Activated CD4-positive, alpha-beta memory T cell treated with anti-CD3 and anti-CD28 coated beads for 36 hours (primary cell): ENCODE measurements at regions of chr13 and their contacts with region 1.

Region 1: GRCh38 chr13:40069173-40070044 is 413.9 kb downstream of the COG6 start:
- DNase-seq: peak; percentile 83
- H3K4me3 Mint-ChIP-seq: no peak overlapping the region
- H3K27ac Mint-ChIP-seq: no peak overlapping the region
- H3K4me1 Mint-ChIP-seq: peaks cover 24% of the 10 kb centered on the region
- H3K27me3 Mint-ChIP-seq: no peaks in the 10 kb centered on the region

Region 2: DNA sequence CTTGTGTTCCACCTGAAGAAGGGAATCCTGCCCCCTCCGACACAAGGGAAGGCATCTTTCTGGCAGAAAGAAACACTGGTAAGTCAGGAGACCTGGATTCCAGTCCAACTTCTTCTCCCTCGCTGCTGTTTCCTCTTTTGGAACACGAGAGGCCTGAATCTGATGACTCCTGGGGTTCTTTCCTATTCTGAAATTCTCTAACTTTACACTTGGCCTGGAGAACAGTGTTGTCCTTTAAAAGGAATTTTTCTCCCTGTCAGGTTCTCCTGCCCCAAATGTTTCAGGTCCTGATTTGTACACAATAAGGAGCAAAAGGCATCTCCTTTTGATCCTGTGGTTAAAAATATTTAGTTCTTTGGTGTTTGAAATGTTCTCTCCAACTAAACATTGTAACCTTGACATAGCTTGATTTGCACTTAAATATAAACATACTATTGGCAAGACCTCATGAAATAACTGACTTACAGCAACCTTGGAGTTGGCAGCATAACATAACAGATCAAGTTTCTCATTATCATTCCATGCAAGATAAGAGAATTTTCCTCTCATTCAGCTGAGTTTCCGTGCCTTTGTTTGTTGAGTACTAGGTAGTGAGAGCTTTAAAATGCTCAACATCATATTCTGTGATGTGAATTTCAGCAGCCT is 169.2 kb before region 1 on chr13:
- CTCF ChIA-PET with region 1: no interaction called
- POLR2A ChIA-PET with region 1: no interaction called
- intact Hi-C with region 1: no loop called
- DNase-seq: no peak
- H3K4me3 Mint-ChIP-seq: no peak overlapping the region
- H3K27ac Mint-ChIP-seq: no peak overlapping the region
- H3K4me1 Mint-ChIP-seq: no peaks in the 10 kb centered on the region
- H3K27me3 Mint-ChIP-seq: no peaks in the 10 kb centered on the region

Region 3: DNA sequence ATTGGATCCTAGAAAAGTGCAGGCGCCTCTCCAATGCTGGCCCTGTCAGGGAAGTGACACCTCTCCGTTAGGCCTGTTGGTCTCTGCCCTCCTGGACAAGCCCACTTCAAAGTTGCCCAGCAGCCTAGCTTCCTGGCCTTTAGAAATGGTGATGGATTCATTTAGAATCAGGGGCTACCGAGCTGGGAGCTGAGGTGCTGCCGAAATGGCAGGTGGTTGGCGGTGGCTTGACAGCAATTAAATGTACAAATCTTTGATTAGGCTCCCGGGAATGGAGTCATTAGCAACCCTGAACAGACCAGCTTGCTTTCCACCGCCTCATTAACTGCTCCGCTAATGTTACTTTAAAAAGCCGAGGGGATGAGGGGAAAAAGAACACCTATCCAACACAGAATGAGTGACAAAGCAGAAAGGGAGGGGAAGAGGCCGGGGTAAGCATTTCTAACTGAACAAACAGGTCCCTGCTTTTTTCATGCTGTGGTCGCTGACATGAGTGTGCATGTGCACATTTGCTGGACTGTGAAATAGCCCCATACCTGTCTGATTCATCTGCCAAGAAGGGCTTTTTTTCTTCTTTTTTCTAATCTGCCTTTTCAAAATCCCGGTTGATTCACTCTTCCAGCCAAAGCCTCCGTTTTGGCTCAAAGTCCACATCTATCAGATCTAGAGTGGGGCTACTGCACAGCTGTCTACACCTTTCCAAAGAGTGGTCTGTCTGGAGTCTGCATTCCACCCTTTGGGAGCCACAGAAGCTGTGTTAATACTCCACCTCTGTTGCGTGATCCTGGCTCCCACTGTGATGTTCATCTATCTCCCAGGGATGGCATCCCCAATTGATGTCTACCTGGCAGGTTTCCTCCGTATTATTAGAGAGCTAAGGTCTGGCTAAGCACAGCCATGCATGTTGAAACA is 17.9 kb after region 1 on chr13:
- CTCF ChIA-PET with region 1: interaction called, 16 read pairs
- POLR2A ChIA-PET with region 1: no interaction called
- intact Hi-C with region 1: no loop called
- DNase-seq: no peak
- H3K4me3 Mint-ChIP-seq: no peak overlapping the region
- H3K27ac Mint-ChIP-seq: no peak overlapping the region
- H3K4me1 Mint-ChIP-seq: peaks cover 4% of the 10 kb centered on the region
- H3K27me3 Mint-ChIP-seq: no peaks in the 10 kb centered on the region

Region 4: DNA sequence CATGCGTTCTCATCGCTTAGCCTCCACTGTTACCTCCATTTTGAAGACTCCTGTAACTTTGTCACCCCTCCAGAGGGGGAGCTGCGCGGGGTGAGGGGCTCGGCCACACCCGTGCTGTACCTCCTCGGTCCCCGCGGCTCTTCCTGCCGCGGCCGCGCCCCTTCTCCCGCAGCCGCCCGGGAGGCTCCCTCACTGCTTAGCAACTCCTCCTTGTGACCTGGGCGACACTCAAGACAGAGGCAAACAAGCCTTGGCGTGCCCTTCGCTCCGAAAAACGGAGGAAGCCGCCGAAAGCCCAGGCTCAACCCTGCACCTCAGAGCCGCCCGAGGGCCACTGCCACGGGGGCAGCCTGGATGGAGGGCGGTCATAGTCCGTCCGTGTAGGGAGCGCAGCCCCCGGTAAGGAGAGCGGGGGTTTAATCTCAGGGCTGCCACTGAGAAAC is 102.8 kb after region 1 on chr13:
- CTCF ChIA-PET with region 1: interaction called, 5 read pairs
- POLR2A ChIA-PET with region 1: no interaction called
- intact Hi-C with region 1: loop called (anchors 5 kb)
- DNase-seq: no peak
- H3K4me3 Mint-ChIP-seq: no peak overlapping the region
- H3K27ac Mint-ChIP-seq: no peak overlapping the region
- H3K4me1 Mint-ChIP-seq: peaks cover 23% of the 10 kb centered on the region
- H3K27me3 Mint-ChIP-seq: no peaks in the 10 kb centered on the region